ENCODE measurements at regions of chr5 and their contacts with region 1.

Region 1: GRCh38 chr5:173615884-173616576 is 420 bp downstream of the BOD1 start:
- DNase-seq: peak; percentile 80
- H3K4me3 Mint-ChIP-seq: peak overlapping the region; percentile 94
- H3K27ac Mint-ChIP-seq: peak overlapping the region; percentile 97
- H3K4me1 Mint-ChIP-seq: peaks cover 31% of the 10 kb centered on the region
- H3K27me3 Mint-ChIP-seq: no peaks in the 10 kb centered on the region

Region 2: DNA sequence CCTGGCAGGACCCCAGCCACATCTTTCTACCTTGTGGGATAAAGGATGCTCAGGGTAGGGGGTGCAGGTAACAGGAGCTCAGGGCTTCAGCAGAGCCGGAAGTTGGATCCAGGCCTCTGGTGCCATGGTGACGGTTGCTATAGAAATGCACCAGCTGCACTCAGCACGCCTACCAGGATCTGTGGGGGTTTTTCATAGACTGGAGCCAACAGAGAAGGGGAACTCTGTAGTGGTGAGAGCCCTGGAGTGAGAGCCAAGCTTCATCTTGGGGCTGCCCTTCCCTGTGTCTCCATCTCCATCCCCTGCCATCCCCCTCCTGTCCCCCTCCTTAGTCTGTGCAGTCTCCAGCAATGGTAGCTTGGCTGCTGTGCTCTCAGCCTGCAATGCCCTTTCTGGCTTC is 27.9 kb after region 1 on chr5:
- CTCF ChIA-PET with region 1: no interaction called
- DNase-seq: no peak
- H3K4me3 Mint-ChIP-seq: no peak overlapping the region
- H3K27ac Mint-ChIP-seq: no peak overlapping the region
- H3K4me1 Mint-ChIP-seq: no peaks in the 10 kb centered on the region
- H3K27me3 Mint-ChIP-seq: peaks cover 4% of the 10 kb centered on the region

Region 3: DNA sequence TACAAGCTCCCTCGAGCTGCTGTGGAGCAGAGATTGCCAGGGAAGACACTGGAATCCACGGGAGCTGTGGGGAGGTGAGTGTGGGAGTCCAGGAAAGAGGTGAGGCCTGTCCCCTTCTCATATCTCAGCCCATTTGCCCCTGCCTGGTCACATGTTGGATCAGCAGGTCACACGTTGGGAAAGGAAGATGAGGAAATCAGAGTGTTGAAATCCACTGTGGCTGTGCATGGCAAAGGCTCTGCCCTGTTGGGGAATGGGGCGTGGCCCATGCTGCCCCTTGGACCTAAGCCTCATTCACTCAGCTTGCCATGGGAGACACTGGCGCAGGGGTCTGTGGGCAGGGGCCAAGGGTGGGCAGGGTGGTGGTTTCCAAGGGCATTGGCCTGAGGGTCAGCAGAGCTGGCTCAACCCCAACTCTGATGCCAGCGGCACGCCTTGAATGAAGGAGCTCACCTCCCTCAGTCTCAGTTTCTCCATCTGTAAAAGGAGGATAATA is 186.7 kb after region 1 on chr5:
- CTCF ChIA-PET with region 1: no interaction called
- DNase-seq: no peak
- H3K4me3 Mint-ChIP-seq: no peak overlapping the region
- H3K27ac Mint-ChIP-seq: no peak overlapping the region
- H3K4me1 Mint-ChIP-seq: no peaks in the 10 kb centered on the region
- H3K27me3 Mint-ChIP-seq: peaks cover 4% of the 10 kb centered on the region

Region 4: DNA sequence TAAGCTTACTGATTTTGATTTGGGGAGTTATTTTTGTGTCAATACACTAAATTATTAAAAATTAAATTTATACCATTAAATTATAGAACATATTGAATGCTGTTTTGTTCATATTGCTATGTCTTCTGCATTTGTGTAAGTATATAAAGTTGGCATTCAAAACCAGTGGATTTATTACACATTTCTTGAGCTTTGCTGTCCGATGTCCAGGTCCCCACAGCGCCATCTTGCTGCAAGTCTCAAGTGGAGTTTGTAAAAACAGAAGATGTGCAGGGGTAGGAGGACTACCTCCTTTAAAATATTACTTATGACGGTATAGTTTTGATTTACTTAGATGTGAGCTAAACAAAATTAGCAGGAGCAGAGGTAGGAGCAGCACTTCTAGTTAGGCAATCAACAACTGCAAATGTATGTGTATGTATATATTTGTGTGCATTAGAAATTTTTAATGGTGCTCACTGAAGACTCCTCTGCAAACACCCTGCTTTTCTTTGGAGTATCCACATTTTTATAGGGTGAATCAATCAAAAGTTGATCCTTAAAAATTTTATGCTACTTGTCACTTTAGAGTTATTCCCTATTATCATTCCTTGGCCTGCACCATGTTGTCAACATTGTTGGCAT is 309.5 kb after region 1 on chr5:
- CTCF ChIA-PET with region 1: interaction called, 19 read pairs
- DNase-seq: peak; percentile 59
- H3K4me3 Mint-ChIP-seq: no peak overlapping the region
- H3K27ac Mint-ChIP-seq: no peak overlapping the region
- H3K4me1 Mint-ChIP-seq: peaks cover 3% of the 10 kb centered on the region
- H3K27me3 Mint-ChIP-seq: no peaks in the 10 kb centered on the region

Region 5: GRCh38 chr5:173940269-173940668 is 324.2 kb after region 1 on chr5:
- CTCF ChIA-PET with region 1: no interaction called
- DNase-seq: no peak
- H3K4me3 Mint-ChIP-seq: no peak overlapping the region
- H3K27ac Mint-ChIP-seq: no peak overlapping the region
- H3K4me1 Mint-ChIP-seq: no peaks in the 10 kb centered on the region
- H3K27me3 Mint-ChIP-seq: no peaks in the 10 kb centered on the region

Region 6: DNA sequence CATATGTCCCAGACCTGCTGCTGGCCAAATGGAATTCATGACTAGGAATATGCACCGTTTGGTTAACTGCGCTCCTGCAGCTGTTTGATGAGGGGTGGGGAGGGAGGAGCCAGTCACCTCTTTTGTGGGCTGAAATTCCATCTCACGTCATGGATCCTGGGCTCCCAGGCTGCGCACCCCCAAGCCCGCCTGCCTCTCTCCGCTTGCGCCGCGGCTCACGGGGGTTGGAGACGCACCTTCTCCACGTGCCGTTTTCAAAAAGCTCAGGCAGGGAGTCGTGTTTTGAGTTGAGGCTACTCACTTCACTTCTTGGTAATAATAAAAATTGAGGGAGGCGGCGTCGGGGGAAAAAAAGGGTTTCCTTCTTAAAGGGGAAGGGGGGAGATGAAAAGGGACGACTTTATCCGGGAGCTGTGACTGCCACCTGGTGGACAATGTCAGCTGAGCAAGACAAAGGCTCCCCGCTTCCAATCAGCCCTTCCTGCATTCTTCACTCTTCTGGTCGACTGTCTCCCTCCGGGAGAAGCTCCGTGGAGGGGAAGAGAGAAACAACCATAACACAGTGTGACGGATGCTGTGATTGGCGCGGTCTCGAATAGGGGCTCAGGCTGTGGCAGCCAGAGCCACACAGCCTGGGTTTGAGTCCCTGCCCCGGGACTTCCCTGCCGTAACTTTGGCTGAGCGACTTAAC is 357.0 kb after region 1 on chr5:
- CTCF ChIA-PET with region 1: interaction called, 77 read pairs
- DNase-seq: peak; percentile 84
- H3K4me3 Mint-ChIP-seq: peak overlapping the region; percentile 71
- H3K27ac Mint-ChIP-seq: no peak overlapping the region
- H3K4me1 Mint-ChIP-seq: peaks cover 13% of the 10 kb centered on the region
- H3K27me3 Mint-ChIP-seq: peaks cover 42% of the 10 kb centered on the region

Region 7: DNA sequence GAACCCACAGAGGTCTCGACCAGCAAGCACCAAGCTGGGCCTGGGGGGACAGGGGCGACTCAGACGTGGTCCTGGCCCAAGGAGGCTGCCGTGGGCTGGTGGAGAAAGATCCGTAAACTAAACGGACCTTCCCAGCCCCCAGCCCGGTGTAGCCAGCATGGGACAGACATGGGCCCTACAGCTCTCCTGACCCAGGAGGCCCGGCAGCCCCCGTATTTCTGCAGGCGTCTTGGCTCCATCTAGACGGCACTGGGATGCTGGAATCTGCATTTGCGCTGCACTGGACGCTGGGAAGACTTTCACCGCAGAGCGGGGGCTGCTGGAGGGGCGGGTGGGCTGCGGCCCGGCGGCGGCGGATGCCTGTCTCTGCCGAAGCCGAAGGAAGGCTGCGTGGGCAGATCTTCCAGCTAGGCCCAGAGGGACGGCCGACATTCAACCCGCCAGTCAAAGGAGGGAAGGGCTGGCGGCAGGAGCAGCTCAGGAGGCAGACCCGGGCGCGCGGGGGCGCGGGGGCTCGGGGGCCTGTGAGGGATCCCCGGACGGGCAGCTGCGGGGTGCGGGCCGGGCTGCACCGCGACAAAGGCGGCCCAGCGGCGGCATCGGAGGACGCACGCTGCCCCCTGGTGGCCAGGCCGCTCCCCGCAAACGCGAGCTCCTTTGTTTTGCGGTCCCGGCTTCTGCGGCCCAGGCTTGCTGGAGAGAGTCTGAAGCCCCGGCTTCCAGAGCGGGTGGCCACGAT is 695.7 kb after region 1 on chr5:
- CTCF ChIA-PET with region 1: interaction called, 25 read pairs
- DNase-seq: peak; percentile 74
- H3K4me3 Mint-ChIP-seq: no peak overlapping the region
- H3K27ac Mint-ChIP-seq: no peak overlapping the region
- H3K4me1 Mint-ChIP-seq: peaks cover 4% of the 10 kb centered on the region
- H3K27me3 Mint-ChIP-seq: peaks cover 32% of the 10 kb centered on the region